Activated naive CD4-positive, alpha-beta T cell treated with anti-CD3 and anti-CD28 coated beads for 36 hours (primary cell): ENCODE measurements at regions of chr17 and their contacts with region 1.

Region 1: DNA sequence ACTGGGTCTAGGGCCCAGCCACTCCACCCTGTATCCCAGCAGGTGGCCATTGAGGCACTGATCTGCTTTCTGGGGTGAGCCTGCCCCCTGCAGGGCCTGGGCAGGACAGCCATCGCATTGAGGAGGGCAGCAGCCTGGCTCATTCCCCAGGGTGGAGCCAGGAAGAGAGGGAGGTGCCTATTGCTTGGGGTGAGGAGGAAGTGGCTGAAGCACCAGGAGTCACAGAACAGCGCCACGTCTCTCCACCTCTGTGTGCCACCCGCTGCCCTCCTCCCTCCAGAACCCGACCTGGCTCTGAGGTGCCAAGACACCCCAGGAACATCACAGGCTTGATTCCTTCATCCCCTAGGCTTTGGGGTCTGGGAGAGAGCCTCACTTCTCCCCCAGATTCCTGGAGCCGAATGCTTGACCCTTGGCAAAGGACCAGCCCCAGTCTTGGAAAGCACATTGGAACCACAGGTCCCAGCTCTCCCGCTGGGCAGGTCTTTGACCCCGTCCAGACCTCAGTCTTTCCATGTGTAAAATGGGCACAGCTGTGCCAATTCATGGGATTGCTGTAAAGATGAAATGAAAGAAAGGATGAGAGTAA is 7.2 kb upstream of the KRT36 start:
- DNase-seq: peak; percentile 87
- H3K4me3 Mint-ChIP-seq: no peak overlapping the region
- H3K27ac Mint-ChIP-seq: no peak overlapping the region
- H3K4me1 Mint-ChIP-seq: peaks cover 6% of the 10 kb centered on the region
- H3K27me3 Mint-ChIP-seq: no peaks in the 10 kb centered on the region

Region 2: GRCh38 chr17:40909351-40909750 is 587.6 kb before region 1 on chr17:
- CTCF ChIA-PET with region 1: interaction called, 3 read pairs
- intact Hi-C with region 1: loop called (anchors 1 kb)
- DNase-seq: peak; percentile 74
- H3K4me3 Mint-ChIP-seq: no peak overlapping the region
- H3K27ac Mint-ChIP-seq: no peak overlapping the region
- H3K4me1 Mint-ChIP-seq: no peaks in the 10 kb centered on the region
- H3K27me3 Mint-ChIP-seq: peaks cover 20% of the 10 kb centered on the region

Region 3: DNA sequence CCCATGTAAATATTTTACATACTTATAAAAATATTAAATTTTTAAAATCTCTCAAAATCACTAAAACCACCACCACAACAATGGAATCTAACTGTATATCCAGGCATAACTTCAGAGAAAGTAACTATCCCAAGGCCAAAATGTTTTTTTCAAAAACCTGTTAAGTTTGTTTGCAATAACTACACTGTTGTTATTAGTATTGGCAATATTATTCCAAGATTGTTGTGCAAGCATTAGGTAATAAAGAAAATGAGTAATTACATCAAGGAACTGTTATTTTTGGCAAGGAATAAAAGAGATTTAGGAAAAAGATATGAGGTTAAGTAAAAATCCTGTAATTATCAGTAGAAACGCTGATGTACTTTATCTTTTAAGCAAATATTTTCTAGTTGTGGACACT is 369.5 kb before region 1 on chr17:
- CTCF ChIA-PET with region 1: no interaction called
- intact Hi-C with region 1: loop called (anchors 10 kb)
- DNase-seq: no peak
- H3K4me3 Mint-ChIP-seq: no peak overlapping the region
- H3K27ac Mint-ChIP-seq: no peak overlapping the region
- H3K4me1 Mint-ChIP-seq: peaks cover 46% of the 10 kb centered on the region
- H3K27me3 Mint-ChIP-seq: no peaks in the 10 kb centered on the region

Region 4: GRCh38 chr17:41338961-41339485 is 157.9 kb before region 1 on chr17:
- CTCF ChIA-PET with region 1: no interaction called
- intact Hi-C with region 1: loop called (anchors 5 kb)
- DNase-seq: peak; percentile 47
- H3K4me3 Mint-ChIP-seq: no peak overlapping the region
- H3K27ac Mint-ChIP-seq: peak overlapping the region; percentile 48
- H3K4me1 Mint-ChIP-seq: peaks cover 85% of the 10 kb centered on the region
- H3K27me3 Mint-ChIP-seq: no peaks in the 10 kb centered on the region

Region 5: GRCh38 chr17:41403798-41404671 is 92.9 kb before region 1 on chr17:
- CTCF ChIA-PET with region 1: no interaction called
- intact Hi-C with region 1: loop called (anchors 2 kb)
- DNase-seq: peak; percentile 85
- H3K4me3 Mint-ChIP-seq: no peak overlapping the region
- H3K27ac Mint-ChIP-seq: peak overlapping the region; percentile 79
- H3K4me1 Mint-ChIP-seq: peaks cover 46% of the 10 kb centered on the region
- H3K27me3 Mint-ChIP-seq: no peaks in the 10 kb centered on the region

Region 6: DNA sequence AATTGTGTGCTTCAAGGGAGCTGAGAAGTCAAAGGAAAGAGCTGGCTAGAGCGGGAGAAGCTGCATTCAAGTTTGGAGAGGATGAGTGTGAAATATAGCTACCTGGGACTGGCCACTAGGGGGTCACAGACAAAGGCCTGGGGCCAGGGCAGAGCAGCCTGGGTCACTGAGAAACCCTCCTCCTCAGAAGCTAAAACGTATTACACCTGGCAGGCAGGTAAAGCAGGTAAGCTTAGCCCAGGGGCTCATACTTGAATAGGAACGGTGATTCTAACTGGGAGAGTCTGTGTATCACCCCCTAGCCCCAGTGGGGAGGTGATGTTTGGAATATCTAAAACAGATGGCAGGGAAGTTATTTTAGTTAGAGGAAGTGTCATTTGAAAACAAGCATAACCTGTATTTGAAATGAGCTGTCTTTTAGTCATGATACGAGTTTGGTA is 79.3 kb before region 1 on chr17:
- CTCF ChIA-PET with region 1: no interaction called
- intact Hi-C with region 1: no loop called
- DNase-seq: no peak
- H3K4me3 Mint-ChIP-seq: no peak overlapping the region
- H3K27ac Mint-ChIP-seq: no peak overlapping the region
- H3K4me1 Mint-ChIP-seq: peaks cover 4% of the 10 kb centered on the region
- H3K27me3 Mint-ChIP-seq: no peaks in the 10 kb centered on the region